Head of caudate nucleus (tissue), 42 donors: ENCODE measurements at regions of chr7 and their contacts with region 1.

Region 1: DNA sequence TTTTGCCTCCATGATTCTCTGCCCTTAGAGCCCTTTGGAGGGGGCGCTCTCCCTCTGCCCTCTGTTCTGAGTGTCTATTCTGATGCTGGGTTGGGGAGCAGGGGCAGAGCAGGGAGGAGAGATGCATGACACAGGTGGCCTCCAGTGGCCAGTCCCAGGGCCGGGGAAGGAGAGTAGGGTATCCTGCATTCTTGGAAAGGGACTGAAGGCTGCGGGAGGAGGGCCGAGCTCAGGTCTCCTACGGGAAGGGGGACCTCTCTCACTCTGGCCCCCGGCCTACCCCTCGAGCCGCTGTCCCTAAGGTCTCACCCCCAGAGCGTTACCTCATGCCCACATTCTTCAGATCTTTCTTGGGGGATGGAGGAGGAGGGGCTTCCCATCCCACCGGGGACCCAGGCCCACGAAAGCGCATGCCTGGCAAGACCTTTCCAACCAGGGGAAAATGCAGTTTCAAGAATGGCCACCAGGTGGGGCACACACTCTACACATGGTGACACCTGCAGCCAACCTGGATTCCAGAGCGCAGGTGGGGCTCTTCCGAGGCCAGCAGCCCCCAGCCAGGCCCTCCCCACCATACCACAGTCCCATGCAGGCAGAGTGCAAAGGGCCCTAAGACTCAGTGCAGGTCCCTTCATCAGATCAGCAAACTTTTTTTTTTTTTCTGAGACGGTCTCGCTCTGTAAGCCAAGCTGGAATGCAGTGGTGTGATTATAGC is 86.4 kb downstream of the MYL10 start:
- DNase-seq: peak; percentile 40 to 92 (median 80)

Region 2: DNA sequence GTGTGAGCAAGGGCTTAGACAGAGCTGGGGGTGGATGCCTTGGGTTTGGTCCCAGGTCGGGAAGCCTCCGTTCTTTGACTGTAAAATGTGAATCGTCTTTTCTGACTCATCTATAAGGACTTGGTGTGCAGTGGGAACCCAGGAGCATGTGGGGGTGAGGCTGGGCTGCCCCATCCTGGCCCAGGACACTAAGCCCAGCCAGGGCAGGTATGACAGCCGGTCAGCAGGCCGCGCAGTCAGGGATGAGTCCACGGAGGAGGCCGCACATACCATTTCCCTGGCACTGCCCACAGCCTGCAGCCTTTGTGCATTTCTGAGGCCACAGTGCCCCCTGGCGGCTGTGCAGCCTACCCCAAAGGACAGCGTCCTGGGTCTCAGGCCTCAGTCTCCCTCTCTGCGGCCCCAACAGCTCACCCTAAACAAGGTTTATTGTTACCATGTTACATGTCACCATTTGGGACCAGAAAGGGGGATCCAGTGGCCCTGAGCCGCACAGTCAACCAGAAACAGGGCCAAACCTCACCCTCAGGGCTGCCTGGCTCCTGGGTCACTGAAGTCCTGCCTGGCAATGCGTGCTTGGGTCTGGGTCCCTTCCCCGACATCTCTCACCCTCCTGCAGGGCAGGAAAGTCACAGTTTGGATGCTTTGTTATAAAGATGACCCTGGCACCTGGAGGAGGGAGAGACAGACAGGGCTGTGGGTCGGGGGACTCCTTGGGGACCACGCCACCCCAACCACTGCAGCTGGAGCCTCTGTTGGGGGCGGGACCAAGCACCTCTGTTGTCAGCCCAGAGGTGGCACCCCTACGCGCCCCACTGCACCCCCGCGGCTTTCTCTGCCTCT is 729.6 kb after region 1 on chr7:
- intact Hi-C with region 1: loop called (anchors 2 kb)
- DNase-seq: peak; percentile 54 to 93 (median 82)